ENCODE measurements at regions of chr16 and their contacts with region 1.

Region 1: GRCh38 chr16:25224731-25225319 is 8.1 kb downstream of the AQP8 start:
- DNase-seq: no peak
- H3K4me3 ChIP-seq: no peak overlapping the region
- H3K27ac ChIP-seq: no peak overlapping the region
- H3K4me1 ChIP-seq: no peaks in the 10 kb centered on the region
- H3K27me3 ChIP-seq: no peaks in the 10 kb centered on the region
- CTCF ChIP-seq: no peak
- POLR2A ChIP-seq: no peak

Region 2: GRCh38 chr16:24516900-24517669 is 707.7 kb before region 1 on chr16:
- CTCF ChIA-PET with region 1: interaction called, 7 read pairs
- POLR2A ChIA-PET with region 1: no interaction called
- dilution Hi-C with region 1: no loop called
- intact Hi-C with region 1: loop called (anchors 1 kb)
- DNase-seq: peak; percentile 89
- H3K4me3 ChIP-seq: no peak overlapping the region
- H3K27ac ChIP-seq: no peak overlapping the region
- H3K4me1 ChIP-seq: no peaks in the 10 kb centered on the region
- H3K27me3 ChIP-seq: peaks cover 0 to 1% of the 10 kb centered on the region in 2 experiments
- CTCF ChIP-seq: peak; percentile 89 to 93
- POLR2A ChIP-seq: no peak

Region 3: GRCh38 chr16:24906199-24907020 is 318.4 kb before region 1 on chr16:
- CTCF ChIA-PET with region 1: interaction called, 22 read pairs
- POLR2A ChIA-PET with region 1: interaction called, 4 read pairs
- dilution Hi-C with region 1: no loop called
- intact Hi-C with region 1: no loop called
- DNase-seq: peak; percentile 51
- H3K4me3 ChIP-seq: no peak overlapping the region
- H3K27ac ChIP-seq: no peak overlapping the region
- H3K4me1 ChIP-seq: no peaks in the 10 kb centered on the region
- H3K27me3 ChIP-seq: no peaks in the 10 kb centered on the region
- CTCF ChIP-seq: peak; percentile 27 to 43
- POLR2A ChIP-seq: no peak

Region 4: GRCh38 chr16:25126820-25127232 is 98.0 kb before region 1 on chr16:
- CTCF ChIA-PET with region 1: interaction called, 53 read pairs
- POLR2A ChIA-PET with region 1: no interaction called
- dilution Hi-C with region 1: no loop called
- intact Hi-C with region 1: loop called (anchors 1 kb)
- DNase-seq: peak; percentile 58
- H3K4me3 ChIP-seq: no peak overlapping the region
- H3K27ac ChIP-seq: no peak overlapping the region
- H3K4me1 ChIP-seq: no peaks in the 10 kb centered on the region
- H3K27me3 ChIP-seq: no peaks in the 10 kb centered on the region
- CTCF ChIP-seq: peak; percentile 48 to 49
- POLR2A ChIP-seq: no peak

Region 5: GRCh38 chr16:25235991-25236390 is 11.2 kb after region 1 on chr16:
- CTCF ChIA-PET with region 1: interaction called, 31 read pairs
- POLR2A ChIA-PET with region 1: no interaction called
- dilution Hi-C with region 1: no loop called
- intact Hi-C with region 1: no loop called
- DNase-seq: no peak
- H3K4me3 ChIP-seq: no peak overlapping the region
- H3K27ac ChIP-seq: no peak overlapping the region
- H3K4me1 ChIP-seq: no peaks in the 10 kb centered on the region
- H3K27me3 ChIP-seq: no peaks in the 10 kb centered on the region
- CTCF ChIP-seq: no peak
- POLR2A ChIP-seq: no peak

Measured in endothelial cell of umbilical vein (primary cell).